ENCODE measurements at regions of chr6 and their contacts with region 1.

Region 1: DNA sequence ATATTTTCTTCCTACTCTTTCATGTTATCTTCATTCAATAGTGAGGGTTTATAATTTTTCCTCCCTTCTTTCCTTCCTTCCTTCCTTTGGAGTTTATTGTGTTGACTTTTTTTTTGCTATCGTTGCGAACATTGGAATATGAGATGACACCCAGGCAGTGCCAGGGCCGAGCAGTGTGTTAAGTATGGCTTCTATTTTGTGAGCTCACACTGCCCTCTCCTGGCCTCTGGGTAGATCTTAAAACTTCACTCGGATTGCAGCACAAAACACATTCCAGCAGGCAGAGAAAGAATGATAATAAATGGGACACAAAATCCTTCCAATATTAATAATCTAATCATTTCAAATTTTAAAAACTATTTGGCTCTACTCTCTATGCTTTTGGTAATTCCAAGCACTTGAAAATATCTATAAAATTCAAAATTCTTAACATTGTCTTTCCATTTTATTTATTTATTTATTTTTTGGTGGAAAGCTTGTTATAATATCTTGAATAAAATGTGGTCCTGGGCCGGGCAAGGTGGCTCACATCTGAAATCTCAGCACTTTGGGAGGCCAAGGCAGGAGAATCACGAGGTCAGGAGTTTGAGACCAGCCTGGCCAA is 147.4 kb upstream of the OLIG3 start:
- DNase-seq: peak; percentile 41 to 84 (median 54)
- ATAC-seq: peak; percentile 84
- H3K4me3 ChIP-seq: no peak overlapping the region
- H3K4me3 Mint-ChIP-seq: no peak overlapping the region
- H3K27ac ChIP-seq: no peak overlapping the region
- H3K27ac Mint-ChIP-seq: no peak overlapping the region
- H3K4me1 ChIP-seq: peaks cover 6% of the 10 kb centered on the region
- H3K4me1 Mint-ChIP-seq: peaks cover 13% of the 10 kb centered on the region
- H3K27me3 ChIP-seq: no peaks in the 10 kb centered on the region
- H3K27me3 Mint-ChIP-seq: peaks cover 11% of the 10 kb centered on the region
- CTCF ChIP-seq: peak; percentile 85

Region 2: GRCh38 chr6:135994857-135995544 is 1646.6 kb before region 1 on chr6:
- CTCF ChIA-PET with region 1: no interaction called
- POLR2A ChIA-PET with region 1: no interaction called
- intact Hi-C with region 1: no loop called
- DNase-seq: peak in 2 of 14 experiments; percentile 5 to 27
- ATAC-seq: no peak
- H3K4me3 ChIP-seq: no peak overlapping the region
- H3K4me3 Mint-ChIP-seq: no peak overlapping the region
- H3K27ac ChIP-seq: no peak overlapping the region
- H3K27ac Mint-ChIP-seq: no peak overlapping the region
- H3K4me1 ChIP-seq: no peaks in the 10 kb centered on the region
- H3K4me1 Mint-ChIP-seq: no peaks in the 10 kb centered on the region
- H3K27me3 ChIP-seq: no peaks in the 10 kb centered on the region
- H3K27me3 Mint-ChIP-seq: no peaks in the 10 kb centered on the region
- CTCF ChIP-seq: no peak

Region 3: DNA sequence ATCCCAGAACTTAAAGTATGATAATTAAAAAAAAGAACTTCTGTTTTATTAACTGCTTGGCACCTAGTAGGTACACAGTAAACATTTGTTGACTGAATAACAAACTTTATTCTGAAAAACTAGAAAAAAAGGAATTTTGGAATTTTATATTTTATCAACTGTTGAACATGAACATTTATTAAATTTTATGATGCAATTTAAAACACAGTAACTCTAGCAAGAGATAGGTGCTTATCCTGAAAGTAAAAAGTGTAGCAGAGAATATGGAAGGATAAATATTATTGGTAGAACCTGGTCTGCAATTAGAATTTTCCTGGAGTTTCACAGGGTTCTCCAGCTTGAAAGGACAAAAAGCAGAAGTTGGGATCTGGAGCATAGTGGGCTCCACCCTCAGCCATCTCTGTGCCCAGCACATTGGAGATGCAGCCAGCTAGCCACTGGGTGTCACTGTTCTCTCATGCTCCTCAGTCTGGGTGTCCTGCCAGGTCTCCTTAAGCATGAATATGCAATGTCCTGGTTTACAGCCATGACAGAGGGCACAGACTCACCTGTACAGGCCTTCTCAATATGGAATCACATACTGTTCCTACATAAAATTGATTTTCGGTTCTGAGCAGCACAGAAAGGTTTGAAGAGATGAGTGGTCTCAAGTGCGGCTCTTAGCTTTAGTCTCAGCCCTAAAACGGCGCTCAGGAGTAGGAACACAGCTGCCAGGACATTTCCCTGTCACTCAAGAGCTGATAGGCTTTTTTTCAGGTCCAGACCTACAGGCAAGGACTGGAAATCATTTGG is 565.1 kb before region 1 on chr6:
- CTCF ChIA-PET with region 1: interaction called, 4 read pairs
- POLR2A ChIA-PET with region 1: no interaction called
- intact Hi-C with region 1: loop called in 1 of 2 experiments (anchors 1 kb)
- DNase-seq: peak; percentile 11 to 76 (median 32)
- ATAC-seq: peak; percentile 72
- H3K4me3 ChIP-seq: no peak overlapping the region
- H3K4me3 Mint-ChIP-seq: no peak overlapping the region
- H3K27ac ChIP-seq: no peak overlapping the region
- H3K27ac Mint-ChIP-seq: no peak overlapping the region
- H3K4me1 ChIP-seq: no peaks in the 10 kb centered on the region
- H3K4me1 Mint-ChIP-seq: no peaks in the 10 kb centered on the region
- H3K27me3 ChIP-seq: peaks cover 0 to 6% of the 10 kb centered on the region in 2 experiments
- H3K27me3 Mint-ChIP-seq: peaks cover 37% of the 10 kb centered on the region
- CTCF ChIP-seq: peak; percentile 69

Region 4: GRCh38 chr6:137271245-137272183 is 370.1 kb before region 1 on chr6:
- CTCF ChIA-PET with region 1: no interaction called
- POLR2A ChIA-PET with region 1: interaction called, 3 read pairs
- intact Hi-C with region 1: loop called (anchors 1 to 2 kb)
- DNase-seq: peak in 3 of 14 experiments; percentile 58 to 64 (median 62)
- ATAC-seq: peak; percentile 66
- H3K4me3 ChIP-seq: no peak overlapping the region
- H3K4me3 Mint-ChIP-seq: no peak overlapping the region
- H3K27ac ChIP-seq: no peak overlapping the region
- H3K27ac Mint-ChIP-seq: no peak overlapping the region
- H3K4me1 ChIP-seq: no peaks in the 10 kb centered on the region
- H3K4me1 Mint-ChIP-seq: peaks cover 4% of the 10 kb centered on the region
- H3K27me3 ChIP-seq: no peaks in the 10 kb centered on the region
- H3K27me3 Mint-ChIP-seq: peaks cover 8% of the 10 kb centered on the region
- CTCF ChIP-seq: peak; percentile 90

Region 5: DNA sequence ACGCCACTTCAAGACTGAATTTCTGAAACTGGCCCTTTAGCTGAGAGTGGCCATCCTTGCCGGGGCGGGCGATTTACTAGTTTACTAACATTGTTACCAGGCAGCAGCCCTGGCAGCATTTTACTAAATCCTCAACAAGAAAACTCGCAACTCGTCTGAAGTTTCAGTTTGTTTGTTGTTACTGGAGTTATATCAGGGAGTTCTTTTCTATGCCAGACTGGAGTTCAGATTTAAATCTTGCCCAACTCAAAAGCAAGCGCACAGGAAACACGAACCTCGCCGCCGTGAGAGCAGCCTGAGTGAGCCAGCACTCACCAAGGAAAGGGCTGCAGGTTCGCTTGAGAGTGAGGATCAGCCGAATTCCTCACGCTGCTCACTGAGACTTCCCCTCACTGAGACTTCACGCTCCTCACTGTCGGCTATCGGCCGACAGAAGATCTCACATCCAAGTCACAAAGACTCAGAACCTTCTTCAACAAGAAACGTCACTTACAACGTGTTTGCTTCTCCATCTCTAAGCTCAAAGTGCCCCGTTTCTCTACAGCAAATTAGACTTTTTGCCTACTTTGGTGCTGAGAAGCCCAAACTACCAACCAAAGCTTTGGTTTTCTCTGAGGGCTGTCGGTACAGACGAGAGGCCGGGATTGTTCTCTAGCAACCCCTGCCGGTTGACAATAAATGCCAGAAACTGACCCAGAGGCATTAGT is 226.3 kb before region 1 on chr6:
- CTCF ChIA-PET with region 1: interaction called, 6 read pairs
- POLR2A ChIA-PET with region 1: no interaction called
- intact Hi-C with region 1: loop called in 1 of 2 experiments (anchors 2 kb)
- DNase-seq: peak; percentile 30 to 86 (median 56)
- ATAC-seq: peak; percentile 91
- H3K4me3 ChIP-seq: peak overlapping the region; percentile 52
- H3K4me3 Mint-ChIP-seq: peak overlapping the region; percentile 85
- H3K27ac ChIP-seq: peak overlapping the region; percentile 36 to 71
- H3K27ac Mint-ChIP-seq: peak overlapping the region; percentile 57
- H3K4me1 ChIP-seq: peaks cover 17% of the 10 kb centered on the region
- H3K4me1 Mint-ChIP-seq: peaks cover 13% of the 10 kb centered on the region
- H3K27me3 ChIP-seq: no peaks in the 10 kb centered on the region
- H3K27me3 Mint-ChIP-seq: peaks cover 4% of the 10 kb centered on the region
- CTCF ChIP-seq: peak; percentile 86

Region 6: GRCh38 chr6:137530404-137530803 is 111.2 kb before region 1 on chr6:
- CTCF ChIA-PET with region 1: no interaction called
- POLR2A ChIA-PET with region 1: no interaction called
- intact Hi-C with region 1: no loop called
- DNase-seq: no peak
- ATAC-seq: no peak
- H3K4me3 ChIP-seq: no peak overlapping the region
- H3K4me3 Mint-ChIP-seq: no peak overlapping the region
- H3K27ac ChIP-seq: no peak overlapping the region
- H3K27ac Mint-ChIP-seq: no peak overlapping the region
- H3K4me1 ChIP-seq: no peaks in the 10 kb centered on the region
- H3K4me1 Mint-ChIP-seq: no peaks in the 10 kb centered on the region
- H3K27me3 ChIP-seq: peaks cover 3 to 8% of the 10 kb centered on the region in 2 experiments
- H3K27me3 Mint-ChIP-seq: peaks cover 16% of the 10 kb centered on the region
- CTCF ChIP-seq: no peak

Region 7: DNA sequence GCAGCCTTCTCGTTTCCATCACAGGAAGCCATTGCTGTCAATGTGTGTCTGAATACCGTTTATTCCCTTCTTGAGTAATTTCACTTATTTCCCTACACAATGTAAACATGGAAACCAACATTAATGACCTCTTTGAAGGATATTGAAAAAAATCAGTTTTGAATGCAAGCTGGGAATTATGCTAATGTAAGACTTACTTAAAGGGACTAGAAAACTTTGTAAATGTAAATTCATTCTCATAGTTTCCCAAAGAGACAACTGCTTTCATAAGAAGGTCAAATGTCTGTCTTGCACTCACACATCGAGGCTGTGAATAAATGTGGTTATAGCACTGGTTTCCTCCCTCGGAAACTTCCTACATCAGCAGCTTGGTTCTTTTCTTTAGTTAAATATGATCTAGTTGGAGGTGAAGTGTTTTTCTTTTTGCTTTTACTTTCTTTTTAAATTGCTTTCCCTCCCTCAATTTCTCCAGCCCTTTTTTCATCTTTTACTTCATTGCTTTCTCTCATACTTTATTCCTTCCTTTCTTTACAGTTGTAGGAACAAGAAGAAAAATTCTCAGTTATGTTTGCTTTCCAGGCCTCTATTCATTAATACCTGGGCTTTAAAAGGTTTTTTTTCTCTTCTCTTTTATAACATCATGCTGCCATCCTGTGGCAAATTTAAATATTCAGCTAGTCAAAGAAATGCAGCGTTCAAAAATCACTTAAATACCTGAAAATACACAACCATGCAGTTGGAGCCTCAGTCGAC is 333.8 kb after region 1 on chr6:
- CTCF ChIA-PET with region 1: no interaction called
- POLR2A ChIA-PET with region 1: no interaction called
- intact Hi-C with region 1: loop called in 1 of 2 experiments (anchors 5 kb)
- DNase-seq: peak in 5 of 14 experiments; percentile 17 to 85 (median 72)
- ATAC-seq: peak; percentile 81
- H3K4me3 ChIP-seq: peak overlapping the region; percentile 19
- H3K4me3 Mint-ChIP-seq: peak overlapping the region; percentile 82
- H3K27ac ChIP-seq: peak overlapping the region; percentile 64 to 72
- H3K27ac Mint-ChIP-seq: peak overlapping the region; percentile 84
- H3K4me1 ChIP-seq: peaks cover 37% of the 10 kb centered on the region
- H3K4me1 Mint-ChIP-seq: peaks cover 29% of the 10 kb centered on the region
- H3K27me3 ChIP-seq: no peaks in the 10 kb centered on the region
- H3K27me3 Mint-ChIP-seq: no peaks in the 10 kb centered on the region
- CTCF ChIP-seq: peak; percentile 60

Measured in CD4-positive, alpha-beta T cell (primary cell).